HEK293T (cell line): ENCODE measurements at regions of chr17 and their contacts with region 1.

Region 1: DNA sequence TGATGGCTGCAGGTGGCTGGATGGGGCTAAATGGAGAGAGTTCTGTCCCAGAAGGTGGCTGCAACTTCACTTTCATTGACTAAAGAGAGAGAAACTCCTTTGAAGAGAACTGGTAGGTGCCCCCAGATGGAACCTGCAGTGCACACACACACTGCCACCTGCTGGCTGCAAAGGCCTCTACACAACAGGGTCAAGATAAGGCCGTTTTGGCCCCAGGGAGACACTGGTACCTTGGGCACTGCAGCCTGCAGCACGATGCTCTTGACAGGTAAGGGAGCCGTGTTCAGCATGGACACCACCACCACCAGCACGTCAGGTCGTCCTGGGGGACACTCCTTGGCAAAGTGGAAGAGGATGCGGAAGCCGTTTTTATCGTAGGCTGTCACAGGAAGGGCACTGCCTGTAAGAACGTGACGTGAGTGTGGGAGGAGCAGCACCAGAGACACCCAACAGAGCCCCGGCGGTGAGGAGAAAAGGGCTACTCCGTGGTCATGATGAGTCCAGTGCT is 22.7 kb downstream of the GGA3 start:
- DNase-seq: peak; percentile 86

Region 2: DNA sequence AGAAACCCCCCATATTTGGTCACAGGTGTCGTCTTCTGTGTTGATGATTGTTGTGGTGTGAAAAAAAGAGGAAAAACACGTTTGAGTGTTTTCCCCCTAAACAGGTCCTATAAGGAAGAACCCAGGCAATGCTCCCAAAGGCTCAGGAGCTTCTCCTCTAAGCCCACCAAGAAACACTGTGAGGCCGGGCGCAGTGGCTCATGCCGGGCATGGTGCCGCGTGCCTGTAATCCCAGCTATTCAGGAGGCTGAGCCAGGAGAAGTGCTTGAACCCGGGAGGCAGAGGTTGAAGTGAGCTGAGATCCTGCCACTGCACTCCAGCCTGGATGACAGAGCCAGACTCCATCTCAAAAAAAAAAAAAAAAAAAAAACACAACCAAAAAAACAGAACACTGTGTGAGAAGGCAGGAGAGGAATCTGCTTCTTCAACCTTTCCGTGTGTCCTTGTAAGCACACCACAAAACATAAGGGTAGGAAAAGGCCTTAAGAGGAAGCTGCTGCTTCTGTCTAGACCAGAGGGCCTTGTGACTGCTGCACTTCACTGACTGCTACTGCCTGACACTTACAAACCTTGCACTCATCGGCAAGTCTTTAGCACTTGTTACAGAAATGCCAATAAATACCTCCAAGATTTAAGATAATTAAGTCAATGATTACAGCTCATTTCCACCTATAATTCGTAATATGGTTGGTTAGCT is 93.8 kb before region 1 on chr17:
- CTCF ChIA-PET with region 1: no interaction called
- POLR2A ChIA-PET with region 1: no interaction called
- DNase-seq: no peak

Region 3: GRCh38 chr17:75228305-75228704 is 10.4 kb before region 1 on chr17:
- CTCF ChIA-PET with region 1: interaction called, 21 read pairs
- POLR2A ChIA-PET with region 1: interaction called, 4 read pairs
- DNase-seq: no peak

Region 4: DNA sequence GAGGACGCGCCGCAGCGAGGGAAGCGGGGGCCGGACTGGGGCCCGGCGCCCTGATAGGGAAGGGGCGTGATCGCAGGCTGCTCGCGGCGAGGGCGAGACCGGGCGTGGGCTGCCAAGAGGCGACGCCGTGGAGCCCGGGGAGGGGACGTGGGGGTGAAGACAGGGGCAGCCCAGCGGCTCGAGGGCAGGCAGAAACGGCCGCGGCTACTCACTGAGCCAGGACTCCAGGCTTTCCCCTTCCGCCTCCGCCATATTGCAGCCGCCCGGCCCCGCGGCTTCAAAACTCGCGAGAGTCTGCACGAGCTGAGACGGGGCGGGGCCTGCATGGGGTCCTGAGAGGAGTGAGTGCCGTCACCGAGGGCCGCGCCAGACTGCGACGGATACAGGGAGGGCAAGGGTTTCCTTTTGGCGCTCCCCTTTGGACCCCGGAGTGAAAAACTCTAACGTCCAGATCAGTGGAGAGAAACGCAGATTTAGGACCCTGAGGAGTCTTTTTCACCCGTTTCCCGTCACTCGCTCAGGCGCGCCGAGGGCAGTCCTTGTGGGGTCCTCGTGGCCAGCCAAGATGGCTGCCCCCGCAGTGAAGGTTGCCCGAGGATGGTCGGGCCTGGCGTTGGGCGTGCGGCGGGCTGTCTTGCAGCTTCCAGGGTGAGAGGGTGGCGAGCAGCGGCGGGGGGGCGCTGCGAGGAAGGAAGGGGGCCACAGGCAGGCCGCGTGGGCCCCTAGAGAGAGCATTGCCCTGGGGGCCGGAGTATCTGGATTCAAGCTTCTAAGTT is 22.8 kb after region 1 on chr17 and contains the starts of genes GGA3 and MRPS7:
- CTCF ChIA-PET with region 1: interaction called, 15 read pairs
- POLR2A ChIA-PET with region 1: interaction called, 12 read pairs
- DNase-seq: peak; percentile 96

Region 5: GRCh38 chr17:75301502-75302206 is 62.9 kb after region 1 on chr17:
- CTCF ChIA-PET with region 1: no interaction called
- POLR2A ChIA-PET with region 1: no interaction called
- DNase-seq: no peak